ENCODE measurements at regions of chr14 and their contacts with region 1.

Region 1: DNA sequence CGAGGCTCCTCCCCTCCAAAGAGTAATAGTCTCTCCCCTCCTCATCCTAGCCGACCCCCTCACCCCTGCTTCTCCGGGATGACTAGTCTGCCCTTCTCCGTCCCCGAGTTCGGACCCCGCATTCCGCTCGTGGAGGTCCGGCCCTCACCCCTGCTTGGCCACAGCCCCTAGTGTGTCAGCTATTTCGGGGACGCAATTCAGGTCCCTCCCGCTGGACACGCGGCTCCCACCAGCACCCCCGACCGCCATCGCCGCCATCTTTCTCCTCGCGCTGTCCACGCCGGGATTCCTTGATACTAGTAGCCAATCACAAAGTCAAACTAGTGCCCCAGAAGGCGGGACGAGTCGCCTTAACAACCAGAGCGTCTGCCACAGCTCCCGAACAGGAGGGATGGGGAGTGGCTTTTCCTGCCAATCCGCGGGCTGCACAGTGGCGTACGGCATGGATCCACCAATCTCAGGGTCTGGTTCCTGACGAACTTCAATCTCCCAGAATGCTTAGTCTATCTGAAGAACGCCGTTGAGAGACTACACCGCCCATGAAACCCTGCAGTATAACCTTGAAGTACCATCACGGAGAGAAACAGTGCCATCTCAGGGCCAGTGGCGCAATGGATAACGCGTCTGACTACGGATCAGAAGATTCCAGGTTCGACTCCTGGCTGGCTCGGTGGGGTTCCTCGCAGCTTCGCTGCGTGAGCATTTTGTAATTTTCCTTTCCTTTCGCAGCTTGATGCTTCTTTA is at the start of gene PRMT5:
- DNase-seq: peak; percentile 92 to 100 (median 97)
- ATAC-seq: peak; percentile 96
- H3K4me3 ChIP-seq: peak within 1 kb of the TSS; percentile 93 to 97
- H3K4me3 Mint-ChIP-seq: no peak within 1 kb of the TSS
- H3K27ac ChIP-seq: peak within 1 kb of the TSS; percentile 74 to 93
- H3K27ac Mint-ChIP-seq: no peak within 1 kb of the TSS
- H3K4me1 ChIP-seq: peaks cover 10% of the 10 kb centered on the region
- H3K4me1 Mint-ChIP-seq: peaks cover 21% of the 10 kb centered on the region
- H3K27me3 ChIP-seq: no peaks in the 10 kb centered on the region
- H3K27me3 Mint-ChIP-seq: no peaks in the 10 kb centered on the region
- CTCF ChIP-seq: no peak
- total RNA-seq, gene PRMT5: 14.3 to 15.2 TPM

Region 2: DNA sequence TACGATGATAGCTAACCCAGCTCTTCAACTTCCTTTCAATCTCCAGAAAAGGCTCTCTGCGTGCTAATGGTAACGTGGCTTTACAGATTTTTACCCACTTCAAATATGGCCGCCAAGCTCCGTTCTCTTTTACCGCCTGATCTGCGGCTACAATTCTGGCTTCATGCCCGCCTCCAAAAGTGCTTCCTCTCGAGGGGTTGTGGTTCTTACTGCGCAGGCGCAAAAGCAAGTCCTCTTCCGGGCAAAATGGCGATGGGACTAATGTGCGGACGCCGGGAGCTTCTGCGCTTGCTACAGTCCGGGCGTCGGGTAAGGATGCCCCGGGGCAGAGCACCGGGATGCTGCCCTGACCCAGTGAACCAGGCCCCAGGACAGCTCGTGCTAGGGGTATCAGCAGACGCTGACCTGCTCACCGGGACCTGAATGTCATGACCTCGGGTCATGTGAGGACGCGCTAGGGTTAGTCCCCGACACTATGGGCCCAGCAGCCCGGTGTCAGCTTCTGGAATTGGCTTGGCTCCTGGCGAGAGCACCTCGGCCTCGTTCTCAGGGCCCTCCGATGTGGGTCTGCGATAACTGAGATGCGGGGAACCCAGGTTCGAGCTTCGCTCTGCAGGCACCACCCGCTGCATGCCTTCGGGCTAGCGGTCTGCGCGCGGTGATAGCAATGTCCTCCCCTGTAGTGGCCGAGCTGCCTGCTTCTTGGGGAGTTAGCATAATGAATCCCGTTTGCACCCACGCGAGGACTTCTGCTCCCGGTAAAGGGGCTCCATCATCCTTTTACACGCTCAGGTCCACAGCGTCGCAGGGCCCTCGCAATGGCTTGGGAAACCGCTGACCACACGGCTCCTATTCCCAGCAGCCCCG is 162.6 kb before region 1 on chr14 and contains the start of gene OXA1L:
- CTCF ChIA-PET with region 1: no interaction called
- POLR2A ChIA-PET with region 1: interaction called, 5 read pairs
- intact Hi-C with region 1: loop called in 1 of 2 experiments (anchors 5 kb)
- DNase-seq: peak; percentile 88 to 99 (median 97)
- ATAC-seq: peak; percentile 92
- H3K4me3 ChIP-seq: peak within 1 kb of the TSS; percentile 93 to 99
- H3K4me3 Mint-ChIP-seq: peak within 1 kb of the TSS; percentile 94
- H3K27ac ChIP-seq: peak within 1 kb of the TSS; percentile 84 to 93
- H3K27ac Mint-ChIP-seq: peak within 1 kb of the TSS; percentile 96
- H3K4me1 ChIP-seq: peaks cover 22% of the 10 kb centered on the region
- H3K4me1 Mint-ChIP-seq: peaks cover 34% of the 10 kb centered on the region
- H3K27me3 ChIP-seq: no peaks in the 10 kb centered on the region
- H3K27me3 Mint-ChIP-seq: no peaks in the 10 kb centered on the region
- CTCF ChIP-seq: no peak
- total RNA-seq, gene OXA1L: 186 to 192 TPM

Region 3: DNA sequence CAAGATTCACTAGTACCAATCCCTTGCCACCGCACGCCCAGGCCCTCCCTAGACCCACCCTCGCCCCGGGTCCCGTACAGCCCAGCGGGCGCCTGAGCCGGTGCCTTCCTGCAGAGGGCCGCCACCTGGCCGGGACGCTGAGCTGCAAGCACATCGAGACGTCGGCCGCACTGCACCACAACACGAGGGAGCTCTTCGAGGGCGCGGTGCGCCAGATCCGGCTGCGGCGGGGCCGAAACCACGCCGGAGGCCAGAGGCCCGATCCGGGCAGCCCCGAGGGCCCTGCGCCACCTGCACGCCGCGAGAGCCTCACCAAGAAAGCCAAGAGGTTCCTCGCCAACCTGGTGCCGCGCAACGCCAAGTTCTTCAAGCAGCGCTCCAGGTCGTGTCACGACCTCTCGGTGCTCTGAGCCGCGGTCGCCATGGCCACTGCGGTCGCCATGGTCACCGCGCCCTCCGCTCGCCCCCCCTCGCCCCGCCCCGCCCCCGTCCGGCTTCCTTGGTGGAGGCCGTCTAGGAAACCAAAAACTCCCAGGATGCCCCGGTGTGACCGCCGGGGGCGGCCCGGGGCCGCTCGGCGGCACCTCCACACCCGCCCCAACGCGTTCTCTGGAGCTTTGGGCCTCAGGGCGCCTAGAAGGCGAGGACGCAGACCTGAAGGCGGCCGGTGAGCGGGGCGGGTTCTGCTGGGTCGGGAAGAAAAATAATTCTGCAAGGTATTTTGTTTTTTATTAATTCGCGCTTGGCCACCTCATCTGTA is 42.6 kb before region 1 on chr14:
- CTCF ChIA-PET with region 1: interaction called, 4 read pairs
- POLR2A ChIA-PET with region 1: interaction called, 10 read pairs
- intact Hi-C with region 1: no loop called
- DNase-seq: peak; percentile 34 to 85 (median 71)
- ATAC-seq: peak; percentile 67
- H3K4me3 ChIP-seq: peak overlapping the region; percentile 40 to 44
- H3K4me3 Mint-ChIP-seq: peak overlapping the region; percentile 81
- H3K27ac ChIP-seq: peak overlapping the region; percentile 29 to 39
- H3K27ac Mint-ChIP-seq: peak overlapping the region; percentile 74
- H3K4me1 ChIP-seq: peaks cover 45% of the 10 kb centered on the region
- H3K4me1 Mint-ChIP-seq: peaks cover 56% of the 10 kb centered on the region
- H3K27me3 ChIP-seq: peaks cover 0 to 2% of the 10 kb centered on the region in 2 experiments
- H3K27me3 Mint-ChIP-seq: no peaks in the 10 kb centered on the region
- CTCF ChIP-seq: no peak

Region 4: DNA sequence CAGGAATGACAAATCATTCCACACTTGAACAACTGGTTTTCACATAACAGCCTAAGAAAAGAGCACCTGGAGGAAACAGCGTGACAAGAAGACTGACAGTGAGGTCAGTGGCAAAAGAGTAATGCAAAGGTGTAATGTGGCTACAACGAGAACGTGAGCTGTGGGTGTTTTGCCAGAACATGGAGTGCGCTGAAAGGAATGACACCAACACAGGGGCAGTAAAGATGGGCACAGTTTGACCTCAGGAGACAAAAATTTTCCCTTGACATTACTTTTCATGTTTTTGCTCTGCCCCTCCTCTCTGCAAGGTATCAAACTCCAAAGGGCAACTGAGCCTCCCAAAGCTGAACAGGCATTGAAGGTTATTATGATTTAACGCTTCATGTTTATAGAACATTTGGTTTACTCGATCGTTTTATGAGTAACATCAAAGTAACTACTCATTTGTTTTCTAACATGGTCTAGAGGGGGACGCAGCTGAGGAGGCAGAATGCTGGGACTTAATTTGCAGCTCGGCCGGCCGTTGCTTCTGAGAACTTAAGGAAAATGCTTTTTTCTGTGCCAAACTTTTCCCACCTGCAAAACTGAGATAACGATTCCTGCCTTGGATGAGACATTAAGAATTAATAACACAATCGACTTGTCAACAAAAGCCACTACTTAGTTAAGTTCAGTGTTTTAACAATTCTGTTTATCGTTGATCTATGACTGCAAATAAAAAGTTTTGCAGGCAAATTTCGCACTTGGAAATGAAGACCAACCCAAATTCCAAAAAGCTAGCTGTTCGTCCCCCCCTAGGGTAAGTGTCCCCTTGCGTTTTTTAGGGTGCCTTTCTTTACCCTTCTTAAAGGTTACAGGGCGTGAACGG is 26.7 kb after region 1 on chr14:
- CTCF ChIA-PET with region 1: interaction called, 3 read pairs
- POLR2A ChIA-PET with region 1: interaction called, 20 read pairs
- intact Hi-C with region 1: loop called (anchors 2 kb)
- DNase-seq: no peak
- ATAC-seq: no peak
- H3K4me3 ChIP-seq: peak overlapping the region; percentile 79 to 95
- H3K4me3 Mint-ChIP-seq: peak overlapping the region; percentile 90
- H3K27ac ChIP-seq: peak overlapping the region; percentile 69 to 84
- H3K27ac Mint-ChIP-seq: peak overlapping the region; percentile 91
- H3K4me1 ChIP-seq: peaks cover 16% of the 10 kb centered on the region
- H3K4me1 Mint-ChIP-seq: peaks cover 16% of the 10 kb centered on the region
- H3K27me3 ChIP-seq: no peaks in the 10 kb centered on the region
- H3K27me3 Mint-ChIP-seq: no peaks in the 10 kb centered on the region
- CTCF ChIP-seq: no peak

Region 5: DNA sequence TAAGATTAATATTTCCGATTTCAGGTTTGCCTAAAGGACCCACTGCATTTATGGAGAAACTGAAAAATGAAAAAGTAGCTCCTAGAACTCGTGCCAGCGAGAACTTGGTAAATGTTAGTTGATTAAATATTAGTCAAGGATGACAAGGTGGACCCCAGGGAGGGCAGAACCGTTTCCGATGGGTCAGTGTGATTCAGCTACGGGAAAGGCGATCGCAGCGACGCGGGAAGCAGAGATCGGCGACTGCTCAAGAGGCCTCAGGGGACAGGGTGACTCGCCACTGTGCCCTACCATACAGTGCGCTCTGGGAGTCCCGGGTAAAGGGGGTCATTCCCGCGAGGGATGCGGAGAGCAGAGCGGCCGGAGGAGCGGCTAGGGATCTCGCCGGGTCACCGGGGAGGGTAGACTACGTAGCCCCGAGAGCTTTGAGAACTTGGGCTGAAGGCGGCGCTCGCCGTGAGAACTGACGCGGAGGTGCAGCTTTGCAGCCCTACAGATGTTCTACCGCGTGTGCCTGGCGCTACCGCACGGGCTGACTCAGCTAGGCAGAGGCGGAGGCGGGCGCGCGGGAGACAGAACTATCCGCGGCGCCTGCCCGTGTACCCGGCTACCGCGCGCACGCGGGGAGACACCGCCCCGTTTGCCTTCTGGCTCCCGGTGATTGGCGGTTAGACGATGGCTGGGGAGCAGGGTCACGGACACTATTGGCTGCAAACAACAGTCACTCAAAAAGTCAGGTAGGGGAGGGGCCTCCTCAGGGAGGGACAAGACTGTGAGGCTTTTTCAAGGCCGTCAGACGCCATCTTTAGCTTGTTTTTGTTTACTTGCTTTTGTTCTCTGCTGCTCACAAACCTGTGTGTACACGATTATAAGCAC is 77.5 kb after region 1 on chr14:
- CTCF ChIA-PET with region 1: interaction called, 13 read pairs
- POLR2A ChIA-PET with region 1: interaction called, 7 read pairs
- intact Hi-C with region 1: loop called (anchors 1 kb)
- DNase-seq: peak; percentile 93 to 99 (median 96)
- ATAC-seq: peak; percentile 92
- H3K4me3 ChIP-seq: peak overlapping the region; percentile 84 to 87
- H3K4me3 Mint-ChIP-seq: peak overlapping the region; percentile 90
- H3K27ac ChIP-seq: peak overlapping the region; percentile 80 to 84
- H3K27ac Mint-ChIP-seq: peak overlapping the region; percentile 98
- H3K4me1 ChIP-seq: peaks cover 20% of the 10 kb centered on the region
- H3K4me1 Mint-ChIP-seq: peaks cover 41% of the 10 kb centered on the region
- H3K27me3 ChIP-seq: no peaks in the 10 kb centered on the region
- H3K27me3 Mint-ChIP-seq: no peaks in the 10 kb centered on the region
- CTCF ChIP-seq: no peak

Region 6: GRCh38 chr14:23057757-23058653 is 128.7 kb after region 1 on chr14:
- CTCF ChIA-PET with region 1: interaction called, 6 read pairs
- POLR2A ChIA-PET with region 1: no interaction called
- intact Hi-C with region 1: loop called in 1 of 2 experiments (anchors 2 kb)
- DNase-seq: peak; percentile 70 to 92 (median 88)
- ATAC-seq: peak; percentile 70
- H3K4me3 ChIP-seq: peak overlapping the region; percentile 56 to 84
- H3K4me3 Mint-ChIP-seq: peak overlapping the region; percentile 87
- H3K27ac ChIP-seq: no peak overlapping the region
- H3K27ac Mint-ChIP-seq: peak overlapping the region; percentile 18
- H3K4me1 ChIP-seq: peaks cover 10% of the 10 kb centered on the region
- H3K4me1 Mint-ChIP-seq: peaks cover 17% of the 10 kb centered on the region
- H3K27me3 ChIP-seq: no peaks in the 10 kb centered on the region
- H3K27me3 Mint-ChIP-seq: no peaks in the 10 kb centered on the region
- CTCF ChIP-seq: peak; percentile 95

Region 7: GRCh38 chr14:23301288-23301968 is 372.2 kb after region 1 on chr14:
- CTCF ChIA-PET with region 1: interaction called, 3 read pairs
- POLR2A ChIA-PET with region 1: no interaction called
- intact Hi-C with region 1: loop called in 1 of 2 experiments (anchors 10 kb)
- DNase-seq: peak; percentile 93 to 99 (median 97)
- ATAC-seq: peak; percentile 74
- H3K4me3 ChIP-seq: peak overlapping the region; percentile 77 to 97
- H3K4me3 Mint-ChIP-seq: peak overlapping the region; percentile 97
- H3K27ac ChIP-seq: peak overlapping the region; percentile 97
- H3K27ac Mint-ChIP-seq: peak overlapping the region; percentile 98
- H3K4me1 ChIP-seq: peaks cover 19% of the 10 kb centered on the region
- H3K4me1 Mint-ChIP-seq: peaks cover 27% of the 10 kb centered on the region
- H3K27me3 ChIP-seq: no peaks in the 10 kb centered on the region
- H3K27me3 Mint-ChIP-seq: peaks cover 14% of the 10 kb centered on the region
- CTCF ChIP-seq: peak; percentile 68

Region 8: DNA sequence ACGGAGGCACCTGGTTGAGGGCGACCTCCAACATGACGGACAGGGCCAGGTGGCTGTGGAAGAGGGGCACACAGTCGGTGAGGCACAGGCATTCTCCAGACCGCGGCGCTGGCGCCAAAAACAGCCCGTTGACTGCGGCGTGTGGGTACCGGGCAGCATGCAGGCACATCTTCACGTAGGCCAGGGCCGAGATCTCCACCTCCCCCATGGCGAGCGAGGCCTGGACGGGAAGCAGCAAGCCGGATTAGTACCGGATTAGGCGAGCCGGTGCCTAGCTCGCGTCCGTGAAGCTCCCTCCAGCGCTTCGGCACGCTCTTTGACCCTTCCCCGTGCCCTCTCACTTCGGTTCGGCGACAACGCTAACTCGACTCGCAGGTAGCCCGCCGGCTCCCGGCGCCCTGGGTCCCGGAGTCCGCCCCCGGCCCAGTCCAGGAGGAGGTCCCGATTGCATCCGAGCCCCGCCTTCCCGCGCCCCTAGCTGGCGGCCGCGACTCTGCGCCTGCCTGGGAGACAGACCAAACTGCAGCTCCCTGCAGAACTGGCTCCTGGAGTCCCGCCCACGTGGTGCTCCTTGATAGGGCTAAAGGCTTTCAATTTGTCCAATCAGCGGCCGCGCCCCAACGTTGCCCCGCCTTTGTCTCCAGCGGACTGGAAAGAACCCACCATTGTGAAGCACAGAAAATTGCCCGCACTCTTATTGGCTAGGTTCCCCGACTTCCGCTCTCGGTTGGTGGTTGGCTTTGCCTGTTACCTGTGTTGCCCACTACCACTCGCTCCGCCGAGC is 1212.0 kb after region 1 on chr14 and contains the start of gene EMC9:
- CTCF ChIA-PET with region 1: no interaction called
- POLR2A ChIA-PET with region 1: no interaction called
- intact Hi-C with region 1: no loop called
- DNase-seq: peak; percentile 98 to 100 (median 99)
- ATAC-seq: peak; percentile 90
- H3K4me3 ChIP-seq: peak within 1 kb of the TSS; percentile 81 to 89
- H3K4me3 Mint-ChIP-seq: peak within 1 kb of the TSS; percentile 86
- H3K27ac ChIP-seq: peak within 1 kb of the TSS; percentile 49 to 74
- H3K27ac Mint-ChIP-seq: peak within 1 kb of the TSS; percentile 84
- H3K4me1 ChIP-seq: peaks cover 51% of the 10 kb centered on the region
- H3K4me1 Mint-ChIP-seq: peaks cover 73% of the 10 kb centered on the region
- H3K27me3 ChIP-seq: no peaks in the 10 kb centered on the region
- H3K27me3 Mint-ChIP-seq: no peaks in the 10 kb centered on the region
- CTCF ChIP-seq: no peak
- total RNA-seq, gene EMC9: 7.8 to 10.4 TPM

Measured in CD8-positive, alpha-beta T cell (primary cell).